ENCODE measurements at regions of chr2 and their contacts with region 1.

Region 1: DNA sequence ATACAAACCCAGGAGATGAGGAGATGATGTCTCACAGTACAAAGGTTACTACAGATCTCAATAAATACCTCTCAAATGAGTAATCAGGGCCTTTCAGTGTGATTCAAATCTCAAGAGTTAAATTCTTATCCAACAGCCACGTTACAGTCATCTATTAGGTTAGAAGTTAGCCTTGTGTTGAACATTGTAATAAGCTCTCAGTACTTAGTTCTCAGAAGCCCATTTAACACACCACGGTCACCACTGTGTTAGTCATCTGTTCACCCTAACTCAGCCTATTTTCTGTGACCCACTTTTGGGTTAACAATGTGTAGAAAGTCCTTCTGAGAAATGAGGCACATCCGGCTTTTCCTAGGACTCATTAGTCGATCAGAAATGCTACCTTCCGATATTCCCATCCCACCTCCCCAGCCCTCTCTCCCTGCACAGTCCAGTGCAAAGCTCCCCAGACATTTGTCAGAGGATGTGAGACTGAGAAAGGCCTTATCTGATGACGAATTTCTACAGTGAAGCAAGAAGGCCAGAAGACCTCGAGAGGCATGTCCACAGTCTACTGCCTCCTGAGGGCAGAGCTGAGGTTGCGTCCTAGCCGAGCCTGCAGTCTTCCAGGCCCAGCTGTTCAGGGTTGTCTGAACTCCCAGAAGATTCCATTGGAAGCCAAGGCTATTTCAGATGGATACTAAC is 92.6 kb downstream of the ACTR2 start:
- DNase-seq: no peak
- H3K4me3 ChIP-seq: no peak overlapping the region
- H3K27ac ChIP-seq: no peak overlapping the region
- H3K4me1 ChIP-seq: no peaks in the 10 kb centered on the region
- H3K27me3 ChIP-seq: no peaks in the 10 kb centered on the region
- CTCF ChIP-seq: peak; percentile 36 to 69 (median 69)
- EP300 ChIP-seq: no peak
- POLR2A ChIP-seq: no peak
- RAD21 ChIP-seq: peak; percentile 16 to 43; a peak in 3 of 4 replicates

Region 2: GRCh38 chr2:65256054-65256453 is 64.1 kb before region 1 on chr2:
- CTCF ChIA-PET with region 1: no interaction called
- POLR2A ChIA-PET with region 1: no interaction called
- DNase-seq: no peak
- H3K4me3 ChIP-seq: no peak overlapping the region
- H3K27ac ChIP-seq: no peak overlapping the region
- H3K4me1 ChIP-seq: no peaks in the 10 kb centered on the region
- H3K27me3 ChIP-seq: no peaks in the 10 kb centered on the region
- CTCF ChIP-seq: peak in 1 of 3 experiments; percentile 3; a peak in 1 of 4 replicates
- EP300 ChIP-seq: no peak
- POLR2A ChIP-seq: no peak
- RAD21 ChIP-seq: no peak; a peak in 1 of 4 replicates

Region 3: DNA sequence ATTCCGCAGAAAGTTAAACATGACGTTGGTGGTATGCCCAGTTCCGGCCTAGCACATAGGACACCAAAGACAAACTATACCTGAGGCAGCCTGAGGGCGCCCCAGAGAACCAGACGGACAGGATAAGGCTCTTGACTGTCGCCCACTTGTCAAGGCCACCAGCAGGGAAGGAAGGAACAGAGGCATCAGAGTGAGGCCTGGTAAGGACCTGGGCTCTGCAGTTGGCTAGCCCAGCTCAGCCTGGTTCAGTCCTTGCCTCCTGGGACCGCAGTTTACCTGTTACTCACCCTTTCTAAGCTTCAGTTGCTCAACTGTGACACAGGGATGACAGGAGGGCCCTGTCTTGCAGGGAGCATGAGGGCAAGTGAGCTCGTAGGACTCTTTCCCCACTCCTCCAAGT is 10.5 kb before region 1 on chr2:
- CTCF ChIA-PET with region 1: interaction called, 13 read pairs
- POLR2A ChIA-PET with region 1: no interaction called
- DNase-seq: no peak
- H3K4me3 ChIP-seq: no peak overlapping the region
- H3K27ac ChIP-seq: no peak overlapping the region
- H3K4me1 ChIP-seq: no peaks in the 10 kb centered on the region
- H3K27me3 ChIP-seq: no peaks in the 10 kb centered on the region
- CTCF ChIP-seq: no peak
- EP300 ChIP-seq: no peak
- POLR2A ChIP-seq: no peak
- RAD21 ChIP-seq: no peak

Region 4: DNA sequence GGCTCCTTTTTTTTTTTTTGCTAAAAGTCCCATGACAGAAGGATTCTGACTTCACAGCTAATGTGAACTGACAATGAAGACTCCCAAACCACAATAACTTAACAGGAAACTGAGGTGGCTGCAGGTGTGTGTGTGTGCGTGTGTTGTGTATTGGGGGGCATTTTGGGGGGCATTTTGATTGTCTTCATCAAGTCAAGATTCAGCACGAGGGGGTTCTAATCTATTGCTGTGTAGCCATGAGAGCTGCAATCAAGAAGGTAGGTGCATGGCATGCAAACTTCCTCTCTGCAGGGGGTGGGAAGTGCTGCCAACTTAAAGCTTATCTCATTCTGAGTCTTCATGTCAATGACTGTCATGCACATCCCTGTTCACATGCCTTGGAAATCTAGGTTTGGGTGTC is 87.1 kb after region 1 on chr2:
- CTCF ChIA-PET with region 1: interaction called, 10 read pairs
- POLR2A ChIA-PET with region 1: no interaction called
- DNase-seq: no peak
- H3K4me3 ChIP-seq: no peak overlapping the region
- H3K27ac ChIP-seq: no peak overlapping the region
- H3K4me1 ChIP-seq: peaks cover 1 to 28% (median 14%) of the 10 kb centered on the region in 4 experiments; a peak in 5 of 7 replicates
- H3K27me3 ChIP-seq: no peaks in the 10 kb centered on the region
- CTCF ChIP-seq: no peak
- EP300 ChIP-seq: no peak
- POLR2A ChIP-seq: no peak
- RAD21 ChIP-seq: no peak

Measured in H1 (cell line).